GM23248 (cell line): ENCODE measurements at regions of chr18 and their contacts with region 1.

Region 1: GRCh38 chr18:2547477-2548087 is 23.7 kb downstream of the METTL4 start:
- DNase-seq: peak; percentile 73
- H3K4me3 ChIP-seq: no peak overlapping the region
- H3K27ac ChIP-seq: no peak overlapping the region
- H3K4me1 ChIP-seq: no peaks in the 10 kb centered on the region
- H3K27me3 ChIP-seq: no peaks in the 10 kb centered on the region

Region 2: DNA sequence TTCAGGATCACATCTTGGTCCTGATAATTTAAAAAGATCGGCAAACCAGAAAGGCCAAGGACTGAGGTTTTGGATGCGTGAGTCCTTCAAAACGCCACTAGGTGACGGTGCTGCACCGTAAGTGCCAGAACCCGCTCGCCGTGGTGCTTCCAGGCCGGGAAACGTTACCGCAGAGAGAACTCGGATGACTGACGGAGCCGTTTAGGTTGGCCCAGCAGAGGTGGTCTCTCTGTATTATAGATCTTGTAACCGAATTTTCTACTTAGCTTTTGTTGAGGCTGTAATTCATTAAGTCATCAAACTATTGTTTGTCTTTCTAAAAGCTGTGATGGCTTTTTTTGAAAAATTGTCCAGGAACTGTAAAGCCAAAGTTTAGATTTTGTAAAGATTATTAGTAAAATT is 1682.7 kb before region 1 on chr18:
- in situ Hi-C with region 1: loop called (anchors 25 kb)
- DNase-seq: peak; percentile 87
- H3K4me3 ChIP-seq: no peak overlapping the region
- H3K27ac ChIP-seq: no peak overlapping the region
- H3K4me1 ChIP-seq: no peaks in the 10 kb centered on the region
- H3K27me3 ChIP-seq: peaks cover 33% of the 10 kb centered on the region

Region 3: GRCh38 chr18:1585879-1586488 is 961.6 kb before region 1 on chr18:
- in situ Hi-C with region 1: loop called (anchors 25 kb)
- DNase-seq: peak; percentile 51
- H3K4me3 ChIP-seq: no peak overlapping the region
- H3K27ac ChIP-seq: no peak overlapping the region
- H3K4me1 ChIP-seq: no peaks in the 10 kb centered on the region
- H3K27me3 ChIP-seq: no peaks in the 10 kb centered on the region

Region 4: GRCh38 chr18:2104620-2105462 is 442.7 kb before region 1 on chr18:
- in situ Hi-C with region 1: loop called (anchors 10 kb)
- DNase-seq: peak; percentile 59
- H3K4me3 ChIP-seq: no peak overlapping the region
- H3K27ac ChIP-seq: no peak overlapping the region
- H3K4me1 ChIP-seq: no peaks in the 10 kb centered on the region
- H3K27me3 ChIP-seq: no peaks in the 10 kb centered on the region; the same call in 1 of the 2 replicates

Region 5: DNA sequence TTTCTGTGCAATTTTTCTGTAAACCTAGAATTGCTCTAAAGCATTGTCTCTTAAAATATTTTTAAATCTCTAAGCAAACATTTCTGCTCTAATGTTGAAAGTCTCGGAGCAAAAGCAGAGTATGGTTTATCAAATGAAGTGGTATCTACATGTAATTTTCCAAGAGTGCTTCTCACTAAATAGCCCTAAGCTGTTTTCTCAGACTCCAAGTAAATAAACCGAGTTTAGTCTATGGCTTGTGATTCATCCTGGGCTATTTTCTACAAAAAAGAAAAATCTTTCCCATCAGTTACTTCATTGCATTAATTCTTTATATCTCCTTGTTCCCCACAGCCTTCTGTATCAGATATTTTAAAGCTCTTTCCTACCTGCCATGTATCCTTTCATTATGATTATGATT is 67.0 kb before region 1 on chr18:
- in situ Hi-C with region 1: no loop called
- DNase-seq: no peak
- H3K4me3 ChIP-seq: no peak overlapping the region
- H3K27ac ChIP-seq: no peak overlapping the region
- H3K4me1 ChIP-seq: no peaks in the 10 kb centered on the region
- H3K27me3 ChIP-seq: no peaks in the 10 kb centered on the region

Region 6: GRCh38 chr18:3088449-3088848 is 540.9 kb after region 1 on chr18:
- in situ Hi-C with region 1: no loop called
- DNase-seq: no peak
- H3K4me3 ChIP-seq: no peak overlapping the region
- H3K27ac ChIP-seq: no peak overlapping the region
- H3K4me1 ChIP-seq: no peaks in the 10 kb centered on the region
- H3K27me3 ChIP-seq: no peaks in the 10 kb centered on the region